Aorta (tissue), 5 donors: ENCODE measurements at regions of chr15 and their contacts with region 1.

Region 1: GRCh38 chr15:40857601-40858341 is 13.9 kb downstream of the SPINT1 start:
- DNase-seq: peak; percentile 80 to 91
- ATAC-seq: peak; percentile 84
- H3K4me3 ChIP-seq: no peak overlapping the region
- H3K27ac ChIP-seq: no peak overlapping the region
- H3K4me1 ChIP-seq: no peaks in the 10 kb centered on the region
- H3K27me3 ChIP-seq: no peaks in the 10 kb centered on the region

Region 2: DNA sequence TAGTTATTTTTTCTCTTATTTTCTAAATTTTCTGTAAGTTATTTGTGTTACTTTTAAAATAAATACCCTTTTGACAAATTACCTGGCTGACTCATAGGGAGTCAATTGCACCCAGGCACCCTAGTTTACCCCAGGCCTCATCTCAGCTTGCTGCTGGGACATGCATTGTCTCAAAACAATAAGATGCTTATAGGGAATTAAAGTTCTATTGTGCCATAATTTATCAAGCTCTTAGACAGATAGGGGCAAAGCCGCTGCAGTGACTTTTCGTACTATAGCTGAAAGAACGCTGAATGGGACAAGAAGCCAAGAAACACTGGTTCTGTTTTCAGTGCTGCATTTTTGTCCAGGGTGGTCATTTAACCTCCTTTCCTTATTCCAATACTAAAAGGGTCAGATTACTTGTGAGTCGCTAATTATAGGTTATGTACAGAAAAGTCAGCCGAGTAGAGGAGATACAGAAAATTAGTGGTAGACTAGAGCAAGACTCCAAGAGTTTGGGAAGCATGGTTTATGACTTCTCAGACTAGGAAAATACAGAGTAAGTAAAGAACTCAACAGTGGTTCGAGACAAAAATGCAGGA is 322.5 kb after region 1 on chr15:
- intact Hi-C with region 1: loop called (anchors 10 kb)
- DNase-seq: no peak
- ATAC-seq: no peak
- H3K4me3 ChIP-seq: no peak overlapping the region
- H3K27ac ChIP-seq: no peak overlapping the region
- H3K4me1 ChIP-seq: no peaks in the 10 kb centered on the region
- H3K27me3 ChIP-seq: no peaks in the 10 kb centered on the region